T-cell (primary cell): ENCODE measurements at regions of chr14 and their contacts with region 1.

Region 1: DNA sequence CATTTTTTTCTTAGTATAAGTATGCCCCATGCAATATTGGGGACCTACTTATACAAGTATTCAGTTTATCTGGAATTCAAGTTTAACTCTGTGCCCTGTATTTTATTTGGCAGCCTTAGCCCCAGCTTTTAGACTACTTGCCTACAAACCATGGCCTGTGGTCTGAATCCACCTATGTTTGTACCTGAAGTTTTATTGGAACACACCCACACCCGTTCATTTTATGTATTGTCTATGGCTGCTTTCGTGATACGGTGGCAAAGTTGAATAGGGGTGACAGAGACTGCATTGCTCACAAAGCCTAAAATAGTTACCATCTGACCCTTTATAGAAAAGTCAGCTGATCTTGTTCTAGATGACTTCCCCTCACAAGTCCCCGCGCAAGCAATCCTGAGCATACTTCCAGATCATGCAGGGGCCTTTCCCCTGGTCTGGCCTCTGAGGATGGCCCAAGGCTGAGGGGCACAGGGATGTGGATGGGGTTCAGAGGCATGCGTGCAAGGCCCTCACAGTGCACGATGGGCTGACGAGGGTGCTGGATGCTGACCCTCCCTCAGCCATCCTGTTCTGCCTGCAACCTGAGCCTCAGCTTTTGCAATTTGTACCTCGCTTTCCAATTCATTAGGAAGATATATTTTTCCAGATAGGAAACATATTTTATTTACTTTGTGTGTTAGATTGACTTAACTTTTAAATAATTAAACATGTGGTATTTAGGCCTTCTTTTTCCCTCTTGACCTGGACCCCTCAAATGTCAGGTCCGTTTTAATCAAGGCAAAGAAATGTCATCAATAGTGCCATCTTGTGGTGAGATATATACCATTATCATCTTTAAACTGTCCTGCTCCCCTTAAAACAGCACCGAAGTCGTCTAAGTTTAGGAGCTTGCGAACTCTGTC is 527.3 kb upstream of the CCDC196 start:
- DNase-seq: peak in 1 of 35 experiments; percentile 68
- ATAC-seq: peak; percentile 59 to 74 (median 62)
- H3K4me3 ChIP-seq: no peak overlapping the region
- H3K4me3 Mint-ChIP-seq: no peak overlapping the region
- H3K27ac ChIP-seq: no peak overlapping the region
- H3K27ac Mint-ChIP-seq: no peak overlapping the region
- H3K4me1 ChIP-seq: peaks cover 7 to 21% of the 10 kb centered on the region in 2 experiments
- H3K4me1 Mint-ChIP-seq: peaks cover 24 to 30% (median 27%) of the 10 kb centered on the region in 3 donors
- H3K27me3 ChIP-seq: peaks cover 0 to 3% of the 10 kb centered on the region in 2 experiments
- H3K27me3 Mint-ChIP-seq: no peaks in the 10 kb centered on the region

Region 2: DNA sequence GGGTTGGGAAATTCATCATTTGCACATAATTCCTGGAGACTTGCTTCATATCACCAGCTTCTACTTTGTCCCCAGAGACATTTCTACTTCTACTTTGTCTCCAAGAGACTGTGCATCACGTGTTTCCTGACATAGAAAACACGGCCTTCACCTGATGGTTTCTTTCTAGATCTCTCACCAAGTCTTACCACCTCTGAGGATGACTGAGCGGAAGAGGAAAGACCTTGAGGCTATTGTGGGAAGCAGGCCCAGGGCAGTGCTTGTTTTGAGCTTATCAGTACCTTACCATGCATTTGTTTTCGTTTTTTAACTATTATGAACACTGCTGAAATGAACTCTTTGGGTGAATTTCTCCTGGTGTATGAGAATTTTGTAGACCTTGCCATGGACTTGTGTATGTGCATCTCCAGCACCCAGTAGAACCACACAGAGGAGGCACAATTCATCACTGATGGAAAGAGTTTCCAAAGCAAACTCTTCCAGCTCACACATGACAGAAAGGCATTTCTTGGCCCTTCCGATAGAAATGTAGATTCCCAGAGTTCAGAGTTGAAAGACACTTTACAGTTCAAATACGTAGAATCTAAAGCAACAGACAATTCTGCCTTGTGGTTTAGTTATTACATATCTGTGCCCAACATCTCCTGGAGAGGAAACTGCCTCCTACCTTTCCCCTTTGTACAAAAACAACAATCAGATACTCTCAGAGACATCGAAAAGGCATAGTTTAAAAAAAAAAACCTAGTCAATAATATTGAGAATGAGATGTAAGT is 111.7 kb before region 1 on chr14:
- CTCF ChIA-PET with region 1: interaction called in 1 of 2 experiments, 12 read pairs
- POLR2A ChIA-PET with region 1: no interaction called
- DNase-seq: peak; percentile 36 to 89 (median 73)
- ATAC-seq: peak; percentile 86 to 90 (median 87)
- H3K4me3 ChIP-seq: peak overlapping the region; percentile 13 to 40
- H3K4me3 Mint-ChIP-seq: peak overlapping the region; percentile 52 to 73 (median 66)
- H3K27ac ChIP-seq: peak overlapping the region; percentile 94
- H3K27ac Mint-ChIP-seq: peak overlapping the region; percentile 87 to 95
- H3K4me1 ChIP-seq: peaks cover 76 to 87% of the 10 kb centered on the region in 2 experiments
- H3K4me1 Mint-ChIP-seq: peaks cover 88 to 91% (median 90%) of the 10 kb centered on the region in 3 donors
- H3K27me3 ChIP-seq: no peaks in the 10 kb centered on the region
- H3K27me3 Mint-ChIP-seq: no peaks in the 10 kb centered on the region

Region 3: DNA sequence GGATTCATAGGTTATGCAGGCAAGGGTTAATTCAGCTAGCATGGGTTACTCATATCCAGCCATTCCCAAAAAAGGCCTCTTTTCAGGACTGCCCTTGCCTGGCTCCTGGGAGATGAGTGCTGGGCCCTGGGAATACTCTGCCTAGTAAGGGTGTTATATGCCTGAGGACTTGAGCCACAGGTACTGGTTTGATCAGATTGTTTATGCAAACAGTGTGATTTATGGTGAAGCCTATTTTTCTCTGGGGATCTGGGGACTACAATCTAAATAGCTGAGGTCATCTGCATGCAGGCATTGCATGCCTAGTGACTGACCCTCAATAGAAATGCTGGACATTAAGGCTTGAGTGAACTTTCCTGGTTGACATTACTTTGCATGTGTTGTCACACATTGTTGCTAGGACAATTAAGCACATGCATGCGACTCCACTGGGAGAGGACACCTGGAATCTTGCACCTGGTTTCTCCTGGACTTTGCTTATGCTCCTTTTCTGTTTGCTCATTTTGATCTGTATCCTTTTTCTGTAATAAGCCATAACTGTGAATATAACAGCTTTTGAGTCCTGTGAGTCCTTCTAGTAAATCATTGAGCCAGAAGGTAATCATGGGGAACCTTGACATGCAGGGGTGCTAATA is 1933.7 kb after region 1 on chr14:
- CTCF ChIA-PET with region 1: no interaction called
- POLR2A ChIA-PET with region 1: no interaction called
- DNase-seq: no peak
- ATAC-seq: no peak
- H3K4me3 ChIP-seq: no peak overlapping the region
- H3K4me3 Mint-ChIP-seq: no peak overlapping the region
- H3K27ac ChIP-seq: no peak overlapping the region
- H3K27ac Mint-ChIP-seq: no peak overlapping the region
- H3K4me1 ChIP-seq: no peaks in the 10 kb centered on the region
- H3K4me1 Mint-ChIP-seq: peaks cover 0 to 6% (median 4%) of the 10 kb centered on the region in 3 donors
- H3K27me3 ChIP-seq: no peaks in the 10 kb centered on the region
- H3K27me3 Mint-ChIP-seq: no peaks in the 10 kb centered on the region